ENCODE measurements at regions of chr2 and their contacts with region 1.

Region 1: GRCh38 chr2:237572021-237572741 is 5.8 kb downstream of the PRLH start:
- DNase-seq: peak; percentile 78
- ATAC-seq: peak; percentile 96
- H3K4me3 Mint-ChIP-seq: no peak overlapping the region
- H3K27ac Mint-ChIP-seq: no peak overlapping the region
- H3K4me1 Mint-ChIP-seq: no peaks in the 10 kb centered on the region
- H3K27me3 Mint-ChIP-seq: peaks cover 15% of the 10 kb centered on the region
- CTCF ChIP-seq: peak; percentile 29

Region 2: DNA sequence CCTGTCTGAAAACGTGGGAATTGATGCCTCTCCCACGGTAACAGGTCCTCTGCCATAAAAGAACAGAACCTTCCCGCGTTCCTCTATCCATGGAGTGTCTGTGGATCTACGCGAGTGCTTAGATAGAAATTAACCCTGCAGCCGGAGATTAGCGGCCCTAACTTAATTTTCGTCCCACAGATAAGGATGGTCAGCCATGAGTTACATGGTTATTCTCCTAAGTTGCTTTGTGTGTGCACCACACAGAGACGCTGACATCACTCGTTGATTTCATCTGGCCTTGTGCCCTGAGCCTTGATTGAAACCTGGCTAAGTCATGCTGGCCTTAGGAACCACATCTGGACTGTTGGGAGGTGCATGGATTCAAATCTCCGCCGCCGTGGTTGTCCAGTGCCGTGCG is 1536.1 kb before region 1 on chr2:
- CTCF ChIA-PET with region 1: no interaction called
- POLR2A ChIA-PET with region 1: no interaction called
- intact Hi-C with region 1: no loop called
- DNase-seq: no peak
- ATAC-seq: no peak
- H3K4me3 Mint-ChIP-seq: no peak overlapping the region
- H3K27ac Mint-ChIP-seq: no peak overlapping the region
- H3K4me1 Mint-ChIP-seq: no peaks in the 10 kb centered on the region
- H3K27me3 Mint-ChIP-seq: no peaks in the 10 kb centered on the region
- CTCF ChIP-seq: no peak

Region 3: GRCh38 chr2:237154082-237154638 is 418.0 kb before region 1 on chr2:
- CTCF ChIA-PET with region 1: interaction called, 22 read pairs
- POLR2A ChIA-PET with region 1: no interaction called
- intact Hi-C with region 1: no loop called
- DNase-seq: no peak
- ATAC-seq: no peak
- H3K4me3 Mint-ChIP-seq: no peak overlapping the region
- H3K27ac Mint-ChIP-seq: no peak overlapping the region
- H3K4me1 Mint-ChIP-seq: no peaks in the 10 kb centered on the region
- H3K27me3 Mint-ChIP-seq: peaks cover 4% of the 10 kb centered on the region
- CTCF ChIP-seq: no peak

Region 4: DNA sequence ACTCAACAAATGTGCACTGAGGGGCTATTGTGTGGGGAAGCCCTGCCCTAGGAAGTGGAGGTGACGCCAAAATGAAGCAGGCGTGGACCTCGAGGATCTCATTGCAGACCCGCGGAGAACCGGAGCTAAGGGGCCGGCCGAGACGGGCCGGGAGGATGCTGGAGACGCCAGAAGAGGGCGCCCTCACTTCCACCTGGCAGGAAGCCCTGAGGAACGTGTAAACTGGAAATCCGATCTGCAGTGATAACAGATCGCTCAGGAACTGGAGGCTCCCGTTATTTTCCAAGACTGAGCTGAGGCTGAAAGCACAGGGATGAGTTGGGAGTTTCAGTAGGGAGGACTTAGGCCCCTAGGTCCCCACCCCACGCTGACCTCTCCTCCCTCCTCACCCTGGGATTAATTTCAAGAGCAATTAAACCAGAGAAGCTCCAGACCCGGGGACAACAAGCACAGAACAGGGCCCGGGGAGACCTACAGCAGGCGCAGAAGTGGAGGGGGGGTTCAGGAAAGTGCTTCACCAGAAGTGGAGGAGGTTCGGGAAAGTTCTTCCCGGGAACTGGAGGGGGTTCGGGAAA is 150.6 kb before region 1 on chr2:
- CTCF ChIA-PET with region 1: interaction called, 9 read pairs
- POLR2A ChIA-PET with region 1: no interaction called
- intact Hi-C with region 1: loop called (anchors 1 kb)
- DNase-seq: peak; percentile 27
- ATAC-seq: no peak
- H3K4me3 Mint-ChIP-seq: no peak overlapping the region
- H3K27ac Mint-ChIP-seq: no peak overlapping the region
- H3K4me1 Mint-ChIP-seq: peaks cover 4% of the 10 kb centered on the region
- H3K27me3 Mint-ChIP-seq: peaks cover 33% of the 10 kb centered on the region
- CTCF ChIP-seq: no peak

Region 5: DNA sequence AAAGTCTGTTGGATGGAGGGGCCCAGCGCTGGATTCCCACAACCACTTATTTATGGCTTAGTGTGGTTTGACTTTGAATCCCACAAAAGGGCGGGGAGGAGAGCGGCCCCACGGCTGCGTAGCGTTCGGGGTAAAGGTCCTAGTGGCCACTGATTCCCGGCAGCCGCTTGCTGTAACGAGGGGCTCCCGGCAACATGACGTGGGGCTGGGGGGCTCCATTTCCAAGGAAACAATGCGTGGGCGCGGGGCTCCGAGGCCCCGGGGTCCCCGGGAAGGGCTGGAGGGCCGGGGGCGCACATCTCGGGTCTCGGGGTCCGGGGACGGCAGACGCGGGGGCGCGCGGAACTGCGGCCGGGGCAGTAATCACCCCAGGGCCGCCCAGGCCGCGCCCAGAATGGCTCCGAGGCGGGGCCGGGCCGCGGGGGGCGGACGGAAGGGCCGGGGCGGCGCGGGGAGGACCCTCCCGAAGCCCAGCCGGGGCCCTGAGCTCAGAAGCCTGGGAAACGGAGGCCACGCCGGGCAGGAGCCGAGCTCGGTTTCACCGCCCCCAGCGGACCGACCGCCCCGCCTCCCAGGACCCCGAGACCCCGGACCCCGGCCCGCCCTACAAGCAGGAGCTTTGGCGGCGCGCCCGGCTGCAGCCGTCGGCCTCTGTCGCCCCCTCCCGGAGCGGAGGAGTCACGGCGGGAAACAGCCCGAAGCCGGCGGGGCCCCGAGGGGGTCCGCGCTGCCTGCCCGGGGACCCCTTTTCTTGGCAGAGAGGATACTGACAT is 97.1 kb before region 1 on chr2:
- CTCF ChIA-PET with region 1: interaction called, 3 read pairs
- POLR2A ChIA-PET with region 1: no interaction called
- intact Hi-C with region 1: loop called (anchors 1 kb)
- DNase-seq: peak; percentile 89
- ATAC-seq: peak; percentile 91
- H3K4me3 Mint-ChIP-seq: peak overlapping the region; percentile 87
- H3K27ac Mint-ChIP-seq: peak overlapping the region; percentile 84
- H3K4me1 Mint-ChIP-seq: peaks cover 8% of the 10 kb centered on the region
- H3K27me3 Mint-ChIP-seq: peaks cover 30% of the 10 kb centered on the region
- CTCF ChIP-seq: peak; percentile 27

Region 6: GRCh38 chr2:237512774-237513466 is 59.3 kb before region 1 on chr2:
- CTCF ChIA-PET with region 1: interaction called, 119 read pairs
- POLR2A ChIA-PET with region 1: no interaction called
- intact Hi-C with region 1: loop called (anchors 1 kb)
- DNase-seq: peak; percentile 58
- ATAC-seq: peak; percentile 64
- H3K4me3 Mint-ChIP-seq: no peak overlapping the region
- H3K27ac Mint-ChIP-seq: no peak overlapping the region
- H3K4me1 Mint-ChIP-seq: no peaks in the 10 kb centered on the region
- H3K27me3 Mint-ChIP-seq: peaks cover 5% of the 10 kb centered on the region
- CTCF ChIP-seq: no peak